ENCODE measurements at regions of chr19 and their contacts with region 1.

Region 1: GRCh38 chr19:55487632-55488152 is 544 bp upstream of the SSC5D start:
- DNase-seq: no peak
- H3K4me3 ChIP-seq: peak overlapping the region in 2 of 3 donors; percentile 11 to 64
- H3K27ac ChIP-seq: peak overlapping the region; percentile 92 to 96
- H3K4me1 ChIP-seq: peaks cover 22 to 23% of the 10 kb centered on the region in 2 donors
- H3K27me3 ChIP-seq: no peaks in the 10 kb centered on the region
- CTCF ChIP-seq: no peak
- POLR2A ChIP-seq: no peak

Region 2: DNA sequence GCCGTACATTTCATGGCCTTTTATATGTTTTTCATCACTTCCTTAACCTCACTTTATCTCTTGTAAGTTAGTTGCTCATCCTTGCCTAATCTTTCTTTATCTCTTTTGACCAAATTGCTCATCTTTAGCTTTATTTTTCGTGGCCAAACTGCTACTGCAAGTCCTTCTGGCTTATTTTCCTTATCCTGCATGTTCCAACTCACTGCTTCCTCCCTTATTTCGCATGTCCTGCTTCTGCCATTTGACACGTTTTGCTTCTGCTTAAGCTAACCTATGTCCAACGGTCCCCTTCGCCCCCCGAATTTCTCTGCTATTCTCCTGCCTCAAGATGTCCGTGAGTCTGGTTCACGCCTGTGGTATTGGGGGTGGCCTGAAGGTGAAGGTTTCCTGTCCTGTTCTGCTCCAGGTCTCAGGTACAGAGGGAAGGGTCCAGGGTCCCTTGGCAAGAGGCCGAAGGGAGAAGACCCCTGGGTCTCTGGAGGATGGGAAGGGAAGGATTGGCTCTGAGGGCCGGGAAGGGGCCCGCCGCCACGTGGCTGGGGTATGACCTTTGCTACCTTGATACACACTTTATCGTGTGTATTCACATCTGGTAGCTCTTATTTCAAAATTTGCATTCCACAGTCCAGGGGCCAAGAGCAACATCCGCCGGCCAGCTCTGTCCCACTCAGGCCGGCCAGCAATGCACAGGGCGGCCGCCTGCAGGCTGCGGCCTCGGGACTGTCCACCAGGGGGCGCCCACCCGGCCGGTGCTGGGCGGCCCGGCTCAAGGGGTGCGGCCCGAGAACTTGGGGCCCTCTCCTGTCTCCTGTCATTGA is 20.2 kb before region 1 on chr19:
- intact Hi-C with region 1: loop called (anchors 1 kb)
- DNase-seq: no peak
- H3K4me3 ChIP-seq: no peak overlapping the region
- H3K27ac ChIP-seq: peak overlapping the region in 1 of 2 donors; percentile 14
- H3K4me1 ChIP-seq: no peaks in the 10 kb centered on the region
- H3K27me3 ChIP-seq: no peaks in the 10 kb centered on the region
- CTCF ChIP-seq: peak; percentile 89 to 94 (median 91)
- POLR2A ChIP-seq: no peak

Measured in breast epithelium (tissue), 4 donors.